Activated B cell treated with CpG ODN at 0.5 μM for 24 hours (primary cell): ENCODE measurements at regions of chr1 and their contacts with region 1.

Region 1: DNA sequence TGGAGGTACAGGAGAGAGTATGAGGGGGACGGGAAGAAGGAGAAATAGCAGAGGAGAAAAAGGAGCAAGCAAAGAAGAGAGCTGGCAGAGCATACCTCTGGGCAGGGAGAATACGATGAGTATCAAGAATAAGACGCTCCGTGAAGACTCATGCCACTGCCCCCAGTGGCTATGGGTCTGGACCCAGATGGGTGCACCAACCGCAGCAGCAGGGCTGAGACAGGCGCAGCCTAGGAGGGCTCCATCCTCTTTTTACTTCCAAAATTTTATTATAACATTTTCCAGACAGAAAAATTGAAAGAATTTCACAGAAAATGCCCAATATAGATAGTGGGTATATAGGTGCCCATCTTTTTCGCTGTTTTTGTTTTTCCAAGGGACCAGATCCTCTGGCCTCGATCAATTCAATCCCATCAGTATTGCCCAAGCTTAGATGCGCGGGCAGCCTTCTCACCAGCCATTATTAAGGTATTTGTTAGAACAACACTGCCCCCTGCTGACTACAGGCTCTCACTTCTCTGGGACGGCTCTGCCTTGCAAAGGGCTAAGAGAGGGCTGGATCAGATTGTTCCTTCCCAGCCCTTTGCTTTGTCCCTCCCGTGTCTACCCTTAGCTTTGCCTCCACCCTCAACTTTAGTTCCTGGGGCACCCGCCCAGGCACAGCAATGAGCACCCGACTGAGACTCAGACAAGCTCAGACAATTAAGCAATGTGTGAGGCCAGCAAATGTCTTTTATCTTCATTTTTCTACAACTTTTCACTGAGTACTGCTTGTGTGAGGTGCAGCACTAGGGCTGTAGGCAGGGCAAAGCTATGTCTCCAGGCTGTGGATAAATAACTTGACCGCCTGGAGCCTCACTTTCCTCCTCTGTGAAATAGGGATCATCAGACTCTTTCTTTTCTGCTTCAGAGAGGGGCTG is 17.5 kb upstream of the CAMK1G start:
- DNase-seq: peak; percentile 23
- ATAC-seq: peak; percentile 77
- H3K4me3 Mint-ChIP-seq: no peak overlapping the region
- H3K27ac Mint-ChIP-seq: no peak overlapping the region
- H3K4me1 Mint-ChIP-seq: peaks cover 6% of the 10 kb centered on the region
- H3K27me3 Mint-ChIP-seq: peaks cover 52% of the 10 kb centered on the region
- CTCF ChIP-seq: no peak

Region 2: GRCh38 chr1:208652296-208653160 is 913.5 kb before region 1 on chr1:
- CTCF ChIA-PET with region 1: interaction called, 4 read pairs
- POLR2A ChIA-PET with region 1: no interaction called
- intact Hi-C with region 1: loop called (anchors 2 kb)
- DNase-seq: no peak
- ATAC-seq: peak; percentile 45
- H3K4me3 Mint-ChIP-seq: no peak overlapping the region
- H3K27ac Mint-ChIP-seq: no peak overlapping the region
- H3K4me1 Mint-ChIP-seq: no peaks in the 10 kb centered on the region
- H3K27me3 Mint-ChIP-seq: peaks cover 22% of the 10 kb centered on the region
- CTCF ChIP-seq: peak; percentile 62

Region 3: GRCh38 chr1:209674957-209675564 is 109.0 kb after region 1 on chr1 and contains the start of gene G0S2:
- CTCF ChIA-PET with region 1: no interaction called
- POLR2A ChIA-PET with region 1: no interaction called
- intact Hi-C with region 1: no loop called
- DNase-seq: peak; percentile 18
- ATAC-seq: peak; percentile 21
- H3K4me3 Mint-ChIP-seq: peak within 1 kb of the TSS; percentile 75
- H3K27ac Mint-ChIP-seq: peak within 1 kb of the TSS; percentile 72
- H3K4me1 Mint-ChIP-seq: peaks cover 37% of the 10 kb centered on the region
- H3K27me3 Mint-ChIP-seq: peaks cover 49% of the 10 kb centered on the region
- CTCF ChIP-seq: no peak
- total RNA-seq, gene G0S2: 2.1 and 2.3 TPM in 2 replicates

Region 4: GRCh38 chr1:209956116-209956515 is 390.1 kb after region 1 on chr1:
- CTCF ChIA-PET with region 1: no interaction called
- POLR2A ChIA-PET with region 1: no interaction called
- intact Hi-C with region 1: no loop called
- DNase-seq: no peak
- ATAC-seq: no peak
- H3K4me3 Mint-ChIP-seq: no peak overlapping the region
- H3K27ac Mint-ChIP-seq: no peak overlapping the region
- H3K4me1 Mint-ChIP-seq: no peaks in the 10 kb centered on the region
- H3K27me3 Mint-ChIP-seq: peaks cover 6% of the 10 kb centered on the region
- CTCF ChIP-seq: no peak